ENCODE measurements at regions of chr7 and their contacts with region 1.

Region 1: DNA sequence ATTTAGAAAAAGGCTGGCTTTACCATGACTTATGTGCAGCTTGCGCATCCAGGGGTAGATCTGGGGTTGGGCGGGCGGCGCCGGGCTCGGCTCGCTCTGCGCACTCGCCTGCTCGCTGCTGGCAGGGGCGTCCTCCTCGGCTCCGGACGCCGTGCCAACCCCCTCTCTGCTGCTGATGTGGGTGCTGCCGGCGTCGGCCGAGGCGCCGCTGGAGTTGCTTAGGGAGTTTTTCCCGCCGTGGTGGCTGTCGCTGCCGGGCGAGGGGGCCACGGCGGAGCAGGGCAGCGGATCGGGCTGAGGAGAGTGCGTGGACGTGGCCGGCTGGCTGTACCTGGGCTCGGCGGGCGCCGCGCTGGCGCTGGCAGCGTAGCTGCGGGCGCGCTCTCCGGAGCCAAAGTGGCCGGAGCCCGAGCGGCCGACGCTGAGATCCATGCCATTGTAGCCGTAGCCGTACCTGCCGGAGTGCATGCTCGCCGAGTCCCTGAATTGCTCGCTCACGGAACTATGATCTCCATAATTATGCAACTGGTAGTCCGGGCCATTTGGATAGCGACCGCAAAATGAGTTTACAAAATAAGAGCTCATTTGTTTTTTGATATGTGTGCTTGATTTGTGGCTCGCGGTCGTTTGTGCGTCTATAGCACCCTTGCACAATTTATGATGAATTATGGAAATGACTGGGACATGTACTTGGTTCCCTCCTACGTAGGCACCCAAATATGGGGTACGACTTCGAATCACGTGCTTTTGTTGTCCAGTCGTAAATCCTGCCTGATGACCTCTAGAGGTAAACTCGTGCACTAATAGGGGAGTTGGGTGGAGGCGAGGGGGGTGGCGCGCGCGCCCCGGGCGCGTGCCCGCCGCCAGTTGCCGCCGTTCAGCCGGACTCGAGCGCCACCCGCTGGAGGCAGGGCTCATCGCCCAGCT is at the start of gene HOXA5:
- DNase-seq: peak; percentile 99
- H3K4me3 ChIP-seq: peak within 1 kb of the TSS; percentile 70 to 81 (median 74)
- H3K27ac ChIP-seq: peak within 1 kb of the TSS; percentile 89
- H3K4me1 ChIP-seq: peaks cover 60% of the 10 kb centered on the region
- H3K27me3 ChIP-seq: no peaks in the 10 kb centered on the region
- CTCF ChIP-seq: peak; percentile 75 to 91
- total RNA-seq, gene HOXA5: 9.1 to 11.0 TPM

Region 2: GRCh38 chr7:26388256-26388655 is 755.0 kb before region 1 on chr7:
- CTCF ChIA-PET with region 1: interaction called, 27 read pairs
- dilution Hi-C with region 1: no loop called
- in situ Hi-C with region 1: no loop called
- intact Hi-C with region 1: no loop called
- DNase-seq: no peak
- H3K4me3 ChIP-seq: no peak overlapping the region
- H3K27ac ChIP-seq: no peak overlapping the region
- H3K4me1 ChIP-seq: no peaks in the 10 kb centered on the region
- H3K27me3 ChIP-seq: peaks cover 8% of the 10 kb centered on the region
- CTCF ChIP-seq: no peak

Region 3: DNA sequence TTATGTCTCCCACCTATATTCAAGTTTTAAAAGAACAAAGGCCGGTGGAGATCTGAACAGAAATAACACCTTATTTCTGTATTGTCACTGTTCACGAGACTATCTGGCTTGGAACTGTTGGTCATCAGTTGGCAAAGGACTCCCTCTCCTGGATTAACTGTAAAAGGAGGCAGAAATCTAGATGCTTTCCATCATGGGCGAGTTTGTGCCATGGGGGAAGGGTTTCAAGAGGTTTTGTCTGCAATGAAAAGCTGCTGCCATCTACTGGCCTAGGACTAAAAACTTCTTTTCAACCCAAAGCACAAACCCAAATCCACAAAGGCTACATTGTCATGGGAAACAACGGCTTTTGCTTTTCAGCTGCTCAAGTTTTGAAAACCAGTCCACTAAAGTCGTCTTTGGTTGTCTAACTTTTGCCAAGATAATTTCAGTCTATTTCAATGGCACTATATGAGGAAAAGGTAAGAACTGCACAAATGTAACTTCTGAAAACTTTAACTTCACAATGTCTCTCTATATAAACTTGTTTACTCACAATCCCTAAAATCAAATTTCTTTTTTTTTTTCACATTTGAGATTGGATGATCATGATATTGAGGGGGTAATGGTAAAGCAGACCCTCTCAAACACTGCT is 475.7 kb before region 1 on chr7:
- CTCF ChIA-PET with region 1: no interaction called
- dilution Hi-C with region 1: no loop called
- in situ Hi-C with region 1: no loop called
- intact Hi-C with region 1: loop called (anchors 1 kb)
- DNase-seq: peak; percentile 86
- H3K4me3 ChIP-seq: no peak overlapping the region
- H3K27ac ChIP-seq: no peak overlapping the region
- H3K4me1 ChIP-seq: no peaks in the 10 kb centered on the region
- H3K27me3 ChIP-seq: no peaks in the 10 kb centered on the region
- CTCF ChIP-seq: peak; percentile 86 to 87

Region 4: DNA sequence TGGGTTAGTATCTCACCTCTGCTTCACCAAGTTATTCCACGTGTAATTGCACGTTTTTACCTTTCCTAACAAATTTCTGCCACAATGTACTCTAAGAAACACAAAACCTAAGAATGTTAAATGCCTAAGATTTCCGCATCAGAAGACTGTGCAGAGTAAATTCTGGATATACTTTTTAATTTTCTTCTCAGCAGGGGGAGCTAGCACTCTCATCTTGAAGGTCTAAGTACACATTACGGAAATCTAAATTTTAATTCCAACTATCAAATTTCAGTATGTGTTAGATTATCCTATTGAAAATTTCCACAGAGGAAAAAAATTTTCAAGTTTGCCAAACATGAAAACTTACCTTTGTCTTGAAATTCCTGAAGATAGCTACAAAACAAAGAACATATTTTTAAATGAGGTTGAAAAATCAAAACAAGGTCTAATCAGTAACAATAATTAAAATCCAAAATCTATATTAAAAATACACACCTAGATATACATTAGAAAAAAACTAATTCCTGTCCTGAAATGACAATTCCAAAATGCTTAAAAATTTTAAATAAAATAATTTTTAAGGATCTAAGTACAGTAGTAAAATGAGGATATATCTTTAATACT is 289.4 kb before region 1 on chr7:
- CTCF ChIA-PET with region 1: interaction called, 17 read pairs
- dilution Hi-C with region 1: no loop called
- in situ Hi-C with region 1: loop called in 1 of 2 experiments (anchors 5 kb)
- intact Hi-C with region 1: no loop called
- DNase-seq: peak; percentile 52
- H3K4me3 ChIP-seq: peak overlapping the region in 1 of 3 experiments; percentile 19
- H3K27ac ChIP-seq: peak overlapping the region; percentile 96
- H3K4me1 ChIP-seq: peaks cover 24% of the 10 kb centered on the region
- H3K27me3 ChIP-seq: no peaks in the 10 kb centered on the region
- CTCF ChIP-seq: peak; percentile 48 to 65